ENCODE measurements at regions of chr18 and their contacts with region 1.

Region 1: DNA sequence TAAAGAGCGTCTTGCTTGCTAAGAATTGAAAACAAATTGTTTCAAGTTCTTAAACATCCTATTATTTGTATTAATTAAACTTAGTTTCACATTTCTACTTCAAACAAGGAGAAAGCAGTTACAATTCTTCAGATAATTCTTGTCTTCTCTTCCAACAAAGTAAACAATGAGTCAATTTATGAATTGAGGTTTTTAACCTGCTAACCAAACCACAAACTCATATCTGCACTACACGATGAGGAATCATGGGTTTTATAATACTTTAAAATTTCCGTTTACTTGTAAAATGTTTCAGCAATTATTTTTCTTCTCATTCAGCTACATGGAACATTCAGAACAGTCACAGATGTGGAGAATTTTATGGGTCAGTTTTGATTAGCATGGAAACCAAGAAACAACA is 114.2 kb downstream of the SPIRE1 start:
- DNase-seq: peak; percentile 62
- H3K4me3 ChIP-seq: no peak overlapping the region
- H3K27ac ChIP-seq: no peak overlapping the region
- H3K4me1 ChIP-seq: peaks cover 9% of the 10 kb centered on the region
- H3K27me3 ChIP-seq: no peaks in the 10 kb centered on the region
- CTCF ChIP-seq: no peak

Region 2: DNA sequence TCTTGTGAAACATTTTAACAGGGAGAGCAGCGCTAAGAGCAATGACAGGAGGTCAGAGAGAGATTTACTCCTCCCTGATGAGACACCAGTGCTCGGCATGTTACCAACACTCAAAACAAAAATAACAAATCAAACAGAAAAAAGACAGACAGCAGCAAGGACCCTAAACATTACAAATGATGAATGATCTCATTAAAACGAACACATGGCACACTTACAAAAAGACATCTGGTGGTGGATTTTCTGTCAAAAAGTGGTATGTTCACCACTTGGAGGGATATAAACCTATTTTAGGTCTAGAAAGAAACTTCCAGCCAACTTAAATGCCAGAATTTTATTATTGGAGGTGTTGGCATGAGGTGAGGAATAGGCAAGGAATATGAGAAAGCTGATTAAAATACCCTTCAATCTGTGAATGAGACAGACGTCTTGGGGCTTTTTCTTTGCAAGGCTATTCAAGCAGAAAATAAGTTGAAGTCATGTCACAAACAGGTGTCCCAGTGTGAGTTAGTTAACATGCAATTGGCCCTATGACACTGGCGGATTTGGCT is 23.2 kb before region 1 on chr18:
- CTCF ChIA-PET with region 1: no interaction called
- dilution Hi-C with region 1: no loop called
- in situ Hi-C with region 1: no loop called
- intact Hi-C with region 1: no loop called
- DNase-seq: no peak
- H3K4me3 ChIP-seq: no peak overlapping the region
- H3K27ac ChIP-seq: no peak overlapping the region
- H3K4me1 ChIP-seq: no peaks in the 10 kb centered on the region
- H3K27me3 ChIP-seq: no peaks in the 10 kb centered on the region
- CTCF ChIP-seq: no peak

Region 3: GRCh38 chr18:12639990-12640880 is 96.5 kb after region 1 on chr18:
- CTCF ChIA-PET with region 1: no interaction called
- dilution Hi-C with region 1: no loop called
- in situ Hi-C with region 1: no loop called
- intact Hi-C with region 1: loop called (anchors 5 kb)
- DNase-seq: peak; percentile 79
- H3K4me3 ChIP-seq: no peak overlapping the region
- H3K27ac ChIP-seq: peak overlapping the region; percentile 74
- H3K4me1 ChIP-seq: peaks cover 38% of the 10 kb centered on the region
- H3K27me3 ChIP-seq: no peaks in the 10 kb centered on the region
- CTCF ChIP-seq: peak in 1 of 2 donors; percentile 17

Region 4: GRCh38 chr18:12679183-12679786 is 135.6 kb after region 1 on chr18:
- CTCF ChIA-PET with region 1: interaction called, 15 read pairs
- dilution Hi-C with region 1: no loop called
- in situ Hi-C with region 1: no loop called
- intact Hi-C with region 1: no loop called
- DNase-seq: no peak
- H3K4me3 ChIP-seq: no peak overlapping the region
- H3K27ac ChIP-seq: no peak overlapping the region
- H3K4me1 ChIP-seq: no peaks in the 10 kb centered on the region
- H3K27me3 ChIP-seq: no peaks in the 10 kb centered on the region
- CTCF ChIP-seq: no peak

Measured in mammary epithelial cell (primary cell).